Endothelial cell of umbilical vein (primary cell): ENCODE measurements at regions of chr17 and their contacts with region 1.

Region 1: GRCh38 chr17:43024407-43025289 is at the start of gene RND2:
- DNase-seq: peak; percentile 93
- H3K4me3 ChIP-seq: peak within 1 kb of the TSS; percentile 32 to 59 (median 53)
- H3K27ac ChIP-seq: peak within 1 kb of the TSS; percentile 13
- H3K4me1 ChIP-seq: peaks cover 12% of the 10 kb centered on the region
- H3K27me3 ChIP-seq: no peaks in the 10 kb centered on the region
- CTCF ChIP-seq: peak; percentile 57 to 82
- POLR2A ChIP-seq: no peak
- total RNA-seq, gene RND2: 0.53 and 0.97 TPM in 2 replicates

Region 2: GRCh38 chr17:42709561-42709960 is 315.1 kb before region 1 on chr17:
- CTCF ChIA-PET with region 1: no interaction called
- POLR2A ChIA-PET with region 1: no interaction called
- dilution Hi-C with region 1: no loop called
- intact Hi-C with region 1: no loop called
- DNase-seq: no peak
- H3K4me3 ChIP-seq: no peak overlapping the region
- H3K27ac ChIP-seq: no peak overlapping the region
- H3K4me1 ChIP-seq: no peaks in the 10 kb centered on the region
- H3K27me3 ChIP-seq: no peaks in the 10 kb centered on the region
- CTCF ChIP-seq: no peak
- POLR2A ChIP-seq: no peak

Region 3: GRCh38 chr17:42997984-42998938 is 26.4 kb before region 1 on chr17 and contains the start of gene RPL27:
- CTCF ChIA-PET with region 1: interaction called, 20 read pairs
- POLR2A ChIA-PET with region 1: interaction called, 5 read pairs
- dilution Hi-C with region 1: no loop called
- intact Hi-C with region 1: loop called (anchors 2 kb)
- DNase-seq: peak; percentile 100
- H3K4me3 ChIP-seq: peak within 1 kb of the TSS; percentile 56 to 86 (median 58)
- H3K27ac ChIP-seq: peak within 1 kb of the TSS; percentile 75
- H3K4me1 ChIP-seq: peaks cover 23% of the 10 kb centered on the region
- H3K27me3 ChIP-seq: no peaks in the 10 kb centered on the region
- CTCF ChIP-seq: peak; percentile 68 to 77
- POLR2A ChIP-seq: peak; percentile 94
- total RNA-seq, gene RPL27: 1,014 and 1,102 TPM in 2 replicates

Region 4: GRCh38 chr17:43125133-43125966 is 100.7 kb after region 1 on chr17 and contains the start of gene BRCA1:
- CTCF ChIA-PET with region 1: interaction called, 10 read pairs
- POLR2A ChIA-PET with region 1: no interaction called
- dilution Hi-C with region 1: no loop called
- intact Hi-C with region 1: loop called (anchors 2 kb)
- DNase-seq: peak; percentile 98
- H3K4me3 ChIP-seq: peak within 1 kb of the TSS; percentile 64 to 92 (median 86)
- H3K27ac ChIP-seq: peak within 1 kb of the TSS; percentile 67
- H3K4me1 ChIP-seq: peaks cover 14% of the 10 kb centered on the region
- H3K27me3 ChIP-seq: no peaks in the 10 kb centered on the region
- CTCF ChIP-seq: no peak
- POLR2A ChIP-seq: peak; percentile 69
- total RNA-seq, gene BRCA1: 25.7 and 29.0 TPM in 2 replicates

Region 5: GRCh38 chr17:43211480-43212402 is 187.1 kb after region 1 on chr17 and contains the start of gene TMEM106A:
- CTCF ChIA-PET with region 1: interaction called, 10 read pairs
- POLR2A ChIA-PET with region 1: no interaction called
- dilution Hi-C with region 1: no loop called
- intact Hi-C with region 1: loop called (anchors 1 kb)
- DNase-seq: peak; percentile 87
- H3K4me3 ChIP-seq: peak within 1 kb of the TSS; percentile 72 to 79 (median 75)
- H3K27ac ChIP-seq: peak within 1 kb of the TSS; percentile 72
- H3K4me1 ChIP-seq: peaks cover 16% of the 10 kb centered on the region
- H3K27me3 ChIP-seq: no peaks in the 10 kb centered on the region
- CTCF ChIP-seq: peak in 1 of 2 donors; percentile 47
- POLR2A ChIP-seq: peak; percentile 96
- total RNA-seq, gene TMEM106A: 11.5 and 14.8 TPM in 2 replicates

Region 6: DNA sequence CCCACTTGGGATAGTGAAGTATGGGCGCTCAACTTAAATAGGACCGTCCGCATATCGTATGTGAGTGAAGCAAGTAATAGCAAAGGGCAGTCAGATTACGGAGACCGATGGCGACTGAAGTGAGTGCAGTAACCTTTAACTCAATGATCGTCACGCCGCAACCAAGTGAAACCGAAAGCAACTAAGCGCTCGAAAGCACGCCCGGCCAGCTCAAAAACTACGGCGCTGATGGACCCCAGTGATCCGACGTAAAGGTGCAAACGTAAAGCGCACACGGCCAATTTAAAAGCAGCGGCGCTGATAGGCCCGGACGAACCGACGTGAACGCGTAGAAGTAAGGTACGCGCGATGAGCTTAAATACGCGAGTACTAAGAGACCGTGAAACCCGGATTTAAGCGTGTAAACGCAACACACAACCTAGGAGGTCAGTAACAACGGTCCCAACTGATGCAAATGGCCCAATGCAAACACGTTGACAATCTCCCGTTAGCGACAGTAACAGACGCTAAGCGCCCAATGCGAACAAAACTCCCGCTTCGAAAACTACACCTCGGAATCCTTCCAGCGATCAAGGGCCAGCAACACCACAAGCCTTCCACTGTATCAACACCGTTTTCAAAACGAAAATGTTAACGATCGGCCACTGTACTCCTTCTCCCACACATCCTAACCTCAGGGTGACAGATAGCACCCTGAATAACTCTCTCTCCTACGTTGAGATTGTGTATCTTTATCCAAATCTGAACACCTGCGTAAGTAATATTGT is 336.3 kb after region 1 on chr17:
- CTCF ChIA-PET with region 1: no interaction called
- POLR2A ChIA-PET with region 1: interaction called, 12 read pairs
- dilution Hi-C with region 1: no loop called
- intact Hi-C with region 1: no loop called
- DNase-seq: peak; percentile 97
- H3K4me3 ChIP-seq: peak overlapping the region in 2 of 3 experiments; percentile 40 to 86
- H3K27ac ChIP-seq: peak overlapping the region; percentile 99
- H3K4me1 ChIP-seq: peaks cover 10% of the 10 kb centered on the region
- H3K27me3 ChIP-seq: no peaks in the 10 kb centered on the region
- CTCF ChIP-seq: no peak
- POLR2A ChIP-seq: peak; percentile 100